Activated CD4-positive, alpha-beta T cell treated with anti-CD3 and anti-CD28 coated beads, Interleukin-2, amount 10 ng/mL, durations not matched to agents 7 days and 5 days (primary cell): ENCODE measurements at regions of chr1 and their contacts with region 1.

Region 1: DNA sequence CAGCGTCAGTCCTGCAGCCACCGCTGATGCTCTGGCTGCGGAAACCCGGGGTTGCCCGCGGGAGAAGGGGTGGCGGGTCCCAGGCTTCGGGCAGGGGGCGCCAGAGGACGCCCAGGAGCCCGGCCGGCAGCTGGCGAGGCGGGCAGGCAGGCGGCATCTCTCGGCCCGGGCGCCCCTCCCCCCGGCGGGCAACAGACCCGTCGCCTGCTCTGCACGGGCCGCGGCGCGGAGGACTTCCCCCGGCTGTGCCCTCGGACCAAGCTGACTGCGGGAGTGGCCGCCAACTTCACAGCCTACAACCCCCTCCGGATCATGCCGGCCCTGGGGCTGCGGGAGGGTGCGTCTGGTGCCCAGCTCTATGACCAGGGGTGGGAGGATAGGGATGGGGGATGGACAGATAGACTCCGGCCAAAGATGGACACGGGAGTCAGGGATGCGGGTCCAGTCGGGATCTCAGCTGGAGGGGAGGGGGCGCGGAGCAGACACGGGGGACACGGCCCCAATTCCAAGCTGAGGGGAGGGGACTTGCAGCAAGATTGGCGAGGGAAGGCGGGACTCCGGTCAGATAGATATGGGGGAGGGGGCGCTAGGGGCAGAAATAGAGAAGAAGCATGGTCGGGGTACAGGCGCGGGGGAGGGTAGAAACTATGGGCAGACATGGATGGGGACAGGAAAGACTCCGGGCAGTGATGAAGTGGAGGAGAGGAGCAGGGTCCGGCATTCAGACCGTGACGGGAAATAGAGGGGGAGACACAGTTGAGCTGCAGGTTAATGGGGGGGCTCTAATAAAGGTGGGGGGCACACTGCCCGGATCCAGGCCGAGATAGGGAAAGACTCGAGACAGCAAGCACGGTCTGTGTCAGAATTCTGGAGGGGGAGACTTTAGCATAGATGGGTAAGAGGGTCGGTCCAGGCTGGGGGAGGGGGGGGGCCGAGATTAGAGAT is 1.1 kb downstream of the ADGRB2 start:
- DNase-seq: peak; percentile 66
- H3K4me3 Mint-ChIP-seq: peak overlapping the region; percentile 65
- H3K27ac Mint-ChIP-seq: no peak overlapping the region
- H3K4me1 Mint-ChIP-seq: peaks cover 31% of the 10 kb centered on the region
- H3K27me3 Mint-ChIP-seq: peaks cover 64% of the 10 kb centered on the region

Region 2: DNA sequence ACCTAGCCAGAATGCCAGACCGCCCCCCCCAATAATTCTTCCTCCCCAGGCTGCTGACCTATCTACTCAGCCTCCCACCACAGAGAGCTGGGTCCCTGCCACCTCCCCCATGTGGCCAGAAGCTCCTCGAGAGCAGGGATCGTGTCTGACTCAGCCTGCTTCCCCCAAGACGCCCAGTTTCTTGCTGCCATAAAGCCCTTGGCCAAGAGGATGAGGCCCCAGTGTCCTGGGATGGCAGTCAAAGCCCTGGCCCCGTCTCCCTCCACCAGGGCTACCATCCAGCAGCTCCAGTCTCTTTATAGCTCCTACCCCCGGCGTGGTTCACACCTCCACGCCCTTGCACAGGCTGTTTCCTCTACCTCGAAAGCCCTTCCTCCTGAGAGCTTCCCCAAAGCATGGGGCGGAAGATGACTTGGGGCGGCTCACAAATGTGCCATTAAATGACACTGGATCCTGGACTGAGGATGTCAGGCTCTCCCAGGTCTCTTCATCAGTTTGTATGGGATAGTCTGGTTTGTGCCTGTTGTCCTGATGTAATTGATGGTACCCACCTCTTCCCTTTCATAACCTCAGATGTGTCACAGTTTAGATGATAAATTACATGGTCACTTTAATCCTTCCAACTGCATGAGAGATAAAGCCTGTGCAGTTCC is 12.0 kb before region 1 on chr1:
- CTCF ChIA-PET with region 1: interaction called, 19 read pairs
- POLR2A ChIA-PET with region 1: no interaction called
- DNase-seq: peak; percentile 20
- H3K4me3 Mint-ChIP-seq: no peak overlapping the region
- H3K27ac Mint-ChIP-seq: no peak overlapping the region
- H3K4me1 Mint-ChIP-seq: peaks cover 21% of the 10 kb centered on the region
- H3K27me3 Mint-ChIP-seq: peaks cover 7% of the 10 kb centered on the region

Region 3: DNA sequence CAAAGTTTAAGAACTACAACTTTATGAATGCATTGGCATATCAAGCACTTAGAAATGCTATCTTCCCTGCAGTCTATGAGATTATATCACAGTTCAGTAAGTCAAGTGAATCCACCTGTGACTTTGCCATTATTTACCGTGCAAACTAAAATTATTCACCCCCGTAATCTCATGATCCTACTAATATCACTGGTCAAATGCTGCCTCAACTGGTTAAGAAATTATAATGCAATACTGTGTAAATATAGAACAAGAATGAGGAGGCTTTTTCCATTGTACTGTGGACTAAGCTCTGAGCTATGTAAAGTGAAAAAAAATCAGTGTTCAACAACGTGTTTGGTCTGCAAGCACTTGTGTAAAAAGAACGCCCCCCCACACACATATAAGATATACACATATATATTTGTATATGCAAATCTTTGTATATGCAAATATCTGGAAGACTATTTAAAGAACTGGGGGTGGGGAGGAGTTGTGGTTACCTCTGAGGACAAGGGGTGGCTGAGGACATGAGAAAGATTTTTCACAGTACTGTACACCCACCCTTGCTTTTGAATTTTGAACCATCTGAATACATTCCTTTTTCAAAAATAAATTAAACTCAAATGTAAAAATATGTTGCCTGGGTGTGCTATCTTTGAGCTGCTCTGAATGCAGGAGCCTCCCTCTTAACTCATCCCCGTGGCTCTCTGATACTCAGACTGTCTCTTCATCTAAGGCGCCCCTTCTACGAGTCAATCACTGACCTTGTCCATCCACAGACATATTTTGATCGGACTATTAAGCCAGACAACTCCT is 118.1 kb after region 1 on chr1:
- CTCF ChIA-PET with region 1: no interaction called
- POLR2A ChIA-PET with region 1: no interaction called
- DNase-seq: no peak
- H3K4me3 Mint-ChIP-seq: no peak overlapping the region
- H3K27ac Mint-ChIP-seq: no peak overlapping the region
- H3K4me1 Mint-ChIP-seq: peaks cover 13% of the 10 kb centered on the region
- H3K27me3 Mint-ChIP-seq: no peaks in the 10 kb centered on the region

Region 4: GRCh38 chr1:31904339-31905092 is 141.5 kb after region 1 on chr1:
- CTCF ChIA-PET with region 1: no interaction called
- POLR2A ChIA-PET with region 1: no interaction called
- DNase-seq: no peak
- H3K4me3 Mint-ChIP-seq: no peak overlapping the region
- H3K27ac Mint-ChIP-seq: no peak overlapping the region
- H3K4me1 Mint-ChIP-seq: peaks cover 43% of the 10 kb centered on the region
- H3K27me3 Mint-ChIP-seq: no peaks in the 10 kb centered on the region